Thyroid gland (tissue), 4 donors: ENCODE measurements at regions of chr22 and their contacts with region 1.

Region 1: DNA sequence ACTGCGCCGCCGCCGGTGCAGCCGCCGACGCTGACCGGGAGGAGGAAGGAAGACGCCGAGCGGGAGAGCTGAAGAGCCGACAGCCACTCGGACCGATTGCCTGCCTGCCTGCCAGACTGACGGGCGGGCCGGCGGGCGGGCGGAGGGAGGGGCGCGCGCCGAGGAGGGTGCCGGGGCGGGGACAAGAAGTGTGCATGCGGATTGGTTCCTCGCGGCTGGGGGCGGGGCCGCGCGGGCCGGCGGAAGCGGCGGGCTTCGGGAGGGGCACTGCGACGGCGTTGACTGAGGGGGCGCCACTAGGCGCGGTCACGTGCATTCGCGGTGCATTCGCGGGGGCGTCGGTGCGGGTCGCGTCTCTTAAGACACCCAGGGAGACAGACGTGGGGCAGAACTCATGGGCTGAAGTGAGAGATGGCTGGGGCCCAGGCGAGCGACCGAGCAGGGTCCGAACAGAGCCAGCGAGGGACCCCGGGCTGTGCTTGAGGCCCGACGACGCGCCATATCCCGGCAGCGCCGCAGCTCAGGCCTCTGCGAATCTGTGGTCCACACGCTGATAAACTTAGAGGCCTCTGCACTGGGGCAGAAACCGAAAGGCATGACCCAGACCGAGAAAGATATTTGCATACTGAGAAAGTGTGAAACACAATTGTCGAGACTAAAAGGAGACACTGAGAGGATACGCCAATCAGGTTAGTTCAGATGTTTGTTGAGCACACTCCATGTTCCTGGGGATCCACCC is at the start of gene MAPK1:
- DNase-seq: peak; percentile 92
- H3K4me3 ChIP-seq: peak within 1 kb of the TSS; percentile 11 to 90 (median 72)
- H3K27ac ChIP-seq: peak within 1 kb of the TSS; percentile 54 to 87 (median 85)
- H3K4me1 ChIP-seq: peaks cover 28 to 33% of the 10 kb centered on the region in 2 donors
- H3K27me3 ChIP-seq: no peaks in the 10 kb centered on the region
- CTCF ChIP-seq: peak in 5 of 6 experiments; percentile 10 to 40 (median 33)
- POLR2A ChIP-seq: peak; percentile 37 to 86
- total RNA-seq, gene MAPK1: 83.1 to 145 (median 97.9) TPM

Region 2: DNA sequence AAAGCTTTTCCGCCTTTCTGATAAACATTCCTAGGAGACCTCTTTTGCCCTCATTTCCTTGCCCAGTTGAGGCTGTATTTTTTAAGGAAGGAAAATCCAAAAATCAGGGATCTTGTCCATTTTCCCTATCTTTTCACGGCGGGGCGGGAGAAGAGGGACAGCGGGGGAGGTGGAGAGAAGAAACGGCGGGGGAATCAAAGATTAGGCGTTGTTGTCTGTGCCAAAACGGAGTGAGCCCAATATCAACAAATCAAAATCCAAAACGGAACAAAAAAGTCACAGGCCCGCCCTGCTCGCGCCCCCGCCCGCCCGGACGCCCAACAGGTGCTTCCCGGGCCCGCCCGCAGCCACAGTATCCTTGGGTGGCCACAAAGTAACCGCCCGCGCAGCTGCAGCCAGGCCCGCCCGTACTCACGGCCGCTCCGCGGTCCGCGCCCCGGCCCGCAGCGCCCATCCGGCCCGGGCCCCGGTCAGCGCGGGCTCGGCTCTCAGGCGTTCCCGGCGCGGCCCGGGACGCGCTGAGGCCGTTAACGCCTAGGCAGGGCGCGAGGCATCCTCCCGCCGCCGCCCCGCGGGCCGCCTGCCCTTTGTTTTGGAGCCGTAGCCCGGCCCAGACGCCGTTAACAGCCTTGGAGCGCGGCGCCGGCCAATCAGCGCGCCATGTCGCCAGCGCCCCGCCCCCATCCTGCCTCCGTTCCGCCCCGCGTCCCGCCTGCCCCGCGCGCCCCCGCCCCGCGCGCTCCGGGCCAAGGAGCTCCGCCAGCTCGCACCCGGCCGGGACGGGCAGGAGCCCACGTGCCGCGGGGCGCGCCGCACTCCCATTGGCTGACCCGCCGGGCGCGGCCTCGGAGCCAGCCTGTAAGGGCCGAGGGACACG is 132.3 kb before region 1 on chr22 and contains the start of gene YPEL1:
- intact Hi-C with region 1: loop called (anchors 10 kb)
- DNase-seq: peak; percentile 97 to 98
- H3K4me3 ChIP-seq: peak within 1 kb of the TSS; percentile 12 to 59 (median 28)
- H3K27ac ChIP-seq: peak within 1 kb of the TSS in 2 of 3 donors; percentile 38 to 52
- H3K4me1 ChIP-seq: peaks cover 6 to 8% of the 10 kb centered on the region in 2 donors
- H3K27me3 ChIP-seq: no peaks in the 10 kb centered on the region
- CTCF ChIP-seq: peak in 1 of 6 experiments; percentile 10
- POLR2A ChIP-seq: peak; percentile 58 to 99
- total RNA-seq, gene YPEL1: 4.1 to 6.7 (median 5.4) TPM

Region 3: GRCh38 chr22:22235558-22235957 is 367.9 kb after region 1 on chr22:
- intact Hi-C with region 1: no loop called
- DNase-seq: peak; percentile 48 to 53
- H3K4me3 ChIP-seq: no peak overlapping the region
- H3K27ac ChIP-seq: no peak overlapping the region
- H3K4me1 ChIP-seq: no peaks in the 10 kb centered on the region
- H3K27me3 ChIP-seq: no peaks in the 10 kb centered on the region
- CTCF ChIP-seq: peak in 2 of 6 experiments; percentile 44 to 49
- POLR2A ChIP-seq: no peak